Panc1 (cell line): ENCODE measurements at regions of chr16 and their contacts with region 1.

Region 1: DNA sequence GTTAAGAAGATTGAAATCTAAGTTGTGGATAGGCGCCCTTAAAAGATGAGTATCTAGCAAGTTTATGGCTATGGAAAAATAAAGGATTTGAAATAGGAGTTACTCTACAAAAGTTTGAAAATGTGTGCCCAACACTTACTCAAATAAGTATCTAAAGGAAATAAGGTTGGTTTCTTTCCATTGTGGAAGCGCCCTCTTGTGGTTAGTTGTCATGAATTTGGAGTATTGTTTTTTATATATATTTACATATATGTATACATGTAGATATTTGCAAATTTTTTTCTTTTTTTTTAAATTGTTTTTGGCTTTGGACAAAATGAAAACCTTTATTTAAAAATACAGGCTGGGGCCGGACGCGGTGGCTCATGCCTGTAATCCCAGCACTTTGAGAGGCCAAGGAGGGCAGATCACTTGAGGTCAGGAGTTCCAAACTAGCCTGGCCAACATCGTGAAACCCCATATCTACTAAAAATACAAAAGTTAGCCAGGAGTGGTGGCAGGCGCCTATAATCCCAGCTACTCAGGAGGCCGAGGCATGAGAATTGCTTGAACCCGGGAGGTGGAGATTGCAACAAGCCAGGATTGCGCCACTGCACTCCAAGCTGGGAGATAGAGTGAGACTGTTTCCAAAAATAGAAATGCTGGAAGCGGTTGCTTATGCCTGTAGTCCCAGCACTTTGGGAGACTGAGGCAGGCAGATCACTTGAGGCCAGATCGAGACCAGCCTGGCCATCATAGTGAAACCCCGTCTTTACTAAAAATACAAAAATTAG is 24.0 kb upstream of the VPS4A start:
- DNase-seq: peak; percentile 2
- ATAC-seq: no peak
- H3K4me3 ChIP-seq: no peak overlapping the region
- H3K27ac ChIP-seq: no peak overlapping the region
- H3K4me1 ChIP-seq: no peaks in the 10 kb centered on the region
- H3K27me3 ChIP-seq: no peaks in the 10 kb centered on the region
- CTCF ChIP-seq: peak; percentile 69

Region 2: GRCh38 chr16:69132424-69133252 is 154.5 kb before region 1 on chr16 and contains the starts of genes CHTF8 and UTP4:
- CTCF ChIA-PET with region 1: no interaction called
- POLR2A ChIA-PET with region 1: interaction called, 12 read pairs
- in situ Hi-C with region 1: no loop called
- intact Hi-C with region 1: no loop called
- DNase-seq: no peak
- ATAC-seq: peak; percentile 99
- H3K4me3 ChIP-seq: peak within 1 kb of the TSS; percentile 61 to 92
- H3K27ac ChIP-seq: peak within 1 kb of the TSS; percentile 89
- H3K4me1 ChIP-seq: peaks cover 17% of the 10 kb centered on the region
- H3K27me3 ChIP-seq: no peaks in the 10 kb centered on the region
- CTCF ChIP-seq: no peak
- total RNA-seq, gene CHTF8: 116 TPM
- total RNA-seq, gene UTP4: 61.7 TPM

Region 3: DNA sequence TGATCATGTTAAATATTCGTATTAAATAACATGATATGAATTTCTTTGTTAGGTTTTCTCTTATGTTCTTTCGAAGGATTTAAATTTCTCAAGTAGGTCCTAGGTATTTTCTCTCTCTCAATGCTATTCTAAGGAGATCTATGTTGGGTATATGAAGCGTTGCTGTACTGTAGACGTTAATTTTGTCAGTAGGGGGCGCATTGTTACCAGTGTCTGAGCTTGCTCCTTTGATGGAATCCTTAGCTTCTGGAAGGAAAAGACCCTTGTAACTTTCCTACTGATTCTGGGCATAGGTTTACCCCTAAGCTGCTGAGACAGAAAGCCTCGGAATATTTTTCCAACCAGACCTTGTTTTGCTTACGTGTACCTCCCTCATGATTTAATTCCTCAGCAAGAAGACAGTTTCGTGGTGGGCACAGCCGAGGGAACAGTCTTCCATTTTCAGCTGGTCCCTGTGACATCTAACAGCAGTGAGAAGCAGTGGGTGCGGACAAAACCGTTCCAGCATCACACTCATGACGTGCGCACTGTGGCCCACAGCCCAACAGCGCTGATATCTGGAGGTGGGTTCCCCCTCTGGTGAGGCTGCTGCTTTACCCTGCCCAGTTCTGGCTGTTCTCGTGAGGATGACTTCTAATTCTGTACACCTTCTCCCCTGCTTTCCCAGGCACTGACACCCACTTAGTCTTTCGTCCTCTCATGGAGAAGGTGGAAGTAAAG is 136.8 kb before region 1 on chr16:
- CTCF ChIA-PET with region 1: interaction called, 4 read pairs
- POLR2A ChIA-PET with region 1: no interaction called
- in situ Hi-C with region 1: no loop called
- intact Hi-C with region 1: loop called (anchors 5 kb)
- DNase-seq: no peak
- ATAC-seq: peak; percentile 90
- H3K4me3 ChIP-seq: no peak overlapping the region
- H3K27ac ChIP-seq: no peak overlapping the region
- H3K4me1 ChIP-seq: no peaks in the 10 kb centered on the region
- H3K27me3 ChIP-seq: no peaks in the 10 kb centered on the region
- CTCF ChIP-seq: peak; percentile 73

Region 4: GRCh38 chr16:69171325-69172084 is 115.6 kb before region 1 on chr16:
- CTCF ChIA-PET with region 1: interaction called, 12 read pairs
- POLR2A ChIA-PET with region 1: no interaction called
- in situ Hi-C with region 1: no loop called
- intact Hi-C with region 1: no loop called
- DNase-seq: no peak
- ATAC-seq: no peak
- H3K4me3 ChIP-seq: no peak overlapping the region
- H3K27ac ChIP-seq: no peak overlapping the region
- H3K4me1 ChIP-seq: peaks cover 8% of the 10 kb centered on the region; the same call in 1 of the 2 replicates
- H3K27me3 ChIP-seq: no peaks in the 10 kb centered on the region
- CTCF ChIP-seq: no peak

Region 5: GRCh38 chr16:69217433-69217832 is 69.7 kb before region 1 on chr16:
- CTCF ChIA-PET with region 1: interaction called, 3 read pairs
- POLR2A ChIA-PET with region 1: interaction called, 11 read pairs
- in situ Hi-C with region 1: no loop called
- intact Hi-C with region 1: no loop called
- DNase-seq: peak; percentile 15
- ATAC-seq: peak; percentile 74; the same call in 1 of the 2 replicates
- H3K4me3 ChIP-seq: no peak overlapping the region
- H3K27ac ChIP-seq: peak overlapping the region; percentile 42; the same call in 1 of the 2 replicates
- H3K4me1 ChIP-seq: peaks cover 45% of the 10 kb centered on the region
- H3K27me3 ChIP-seq: no peaks in the 10 kb centered on the region
- CTCF ChIP-seq: no peak

Region 6: GRCh38 chr16:69236319-69236718 is 50.8 kb before region 1 on chr16:
- CTCF ChIA-PET with region 1: interaction called, 10 read pairs
- POLR2A ChIA-PET with region 1: no interaction called
- in situ Hi-C with region 1: no loop called
- intact Hi-C with region 1: no loop called
- DNase-seq: no peak
- ATAC-seq: no peak
- H3K4me3 ChIP-seq: no peak overlapping the region
- H3K27ac ChIP-seq: no peak overlapping the region
- H3K4me1 ChIP-seq: 0 out of 2 replicates have a peak, but pooled peaks cover 3% of the 10 kb centered on the region
- H3K27me3 ChIP-seq: no peaks in the 10 kb centered on the region
- CTCF ChIP-seq: no peak

Region 7: DNA sequence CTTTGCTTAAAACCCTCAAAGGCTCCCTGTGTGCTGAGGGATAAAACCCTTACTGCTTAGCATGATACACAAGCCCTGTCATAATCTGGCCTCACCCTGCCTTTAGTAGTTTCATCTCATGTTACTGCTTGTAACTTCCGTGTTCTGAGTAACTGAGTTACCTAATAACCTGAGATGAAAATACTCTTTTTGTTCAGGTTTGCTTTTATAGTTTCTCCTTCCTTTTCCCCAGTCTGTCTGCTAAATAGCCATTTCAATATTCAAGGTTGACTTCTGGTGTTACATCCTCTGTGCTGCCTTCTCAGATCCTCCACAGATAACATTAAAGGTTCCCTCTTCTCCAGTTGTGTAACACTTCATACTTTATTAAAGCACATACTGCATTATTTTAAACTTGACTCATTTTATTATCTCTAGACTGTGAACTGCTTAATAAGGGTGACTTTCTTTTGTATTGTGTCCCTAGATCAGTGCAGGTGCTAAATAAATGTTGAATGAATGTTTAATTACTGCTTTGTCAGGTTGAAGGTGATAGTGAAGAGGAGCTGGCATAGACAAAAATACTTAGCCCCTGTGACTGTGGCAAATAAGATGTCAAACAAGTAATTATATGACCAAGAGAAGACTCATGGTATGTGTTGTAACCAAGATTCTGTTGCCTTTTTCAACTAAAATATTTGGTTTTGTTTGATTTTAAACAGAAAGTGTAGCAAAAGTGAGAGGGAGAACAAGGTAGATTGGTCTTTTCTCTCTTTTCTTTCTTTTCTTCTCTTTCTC is 326.4 kb after region 1 on chr16:
- CTCF ChIA-PET with region 1: no interaction called
- POLR2A ChIA-PET with region 1: no interaction called
- in situ Hi-C with region 1: no loop called
- intact Hi-C with region 1: no loop called
- DNase-seq: no peak
- ATAC-seq: no peak
- H3K4me3 ChIP-seq: no peak overlapping the region
- H3K27ac ChIP-seq: no peak overlapping the region
- H3K4me1 ChIP-seq: peaks cover 49% of the 10 kb centered on the region
- H3K27me3 ChIP-seq: no peaks in the 10 kb centered on the region
- CTCF ChIP-seq: no peak